Activated B cell treated with CpG ODN at 0.5 μM for 24 hours (primary cell): ENCODE measurements at regions of chr12 and their contacts with region 1.

Region 1: GRCh38 chr12:123580772-123581171 is 3.6 kb upstream of the TMED2 start:
- DNase-seq: no peak
- ATAC-seq: no peak
- H3K4me3 Mint-ChIP-seq: no peak overlapping the region
- H3K27ac Mint-ChIP-seq: no peak overlapping the region
- H3K4me1 Mint-ChIP-seq: peaks cover 26% of the 10 kb centered on the region
- H3K27me3 Mint-ChIP-seq: no peaks in the 10 kb centered on the region
- CTCF ChIP-seq: no peak

Region 2: DNA sequence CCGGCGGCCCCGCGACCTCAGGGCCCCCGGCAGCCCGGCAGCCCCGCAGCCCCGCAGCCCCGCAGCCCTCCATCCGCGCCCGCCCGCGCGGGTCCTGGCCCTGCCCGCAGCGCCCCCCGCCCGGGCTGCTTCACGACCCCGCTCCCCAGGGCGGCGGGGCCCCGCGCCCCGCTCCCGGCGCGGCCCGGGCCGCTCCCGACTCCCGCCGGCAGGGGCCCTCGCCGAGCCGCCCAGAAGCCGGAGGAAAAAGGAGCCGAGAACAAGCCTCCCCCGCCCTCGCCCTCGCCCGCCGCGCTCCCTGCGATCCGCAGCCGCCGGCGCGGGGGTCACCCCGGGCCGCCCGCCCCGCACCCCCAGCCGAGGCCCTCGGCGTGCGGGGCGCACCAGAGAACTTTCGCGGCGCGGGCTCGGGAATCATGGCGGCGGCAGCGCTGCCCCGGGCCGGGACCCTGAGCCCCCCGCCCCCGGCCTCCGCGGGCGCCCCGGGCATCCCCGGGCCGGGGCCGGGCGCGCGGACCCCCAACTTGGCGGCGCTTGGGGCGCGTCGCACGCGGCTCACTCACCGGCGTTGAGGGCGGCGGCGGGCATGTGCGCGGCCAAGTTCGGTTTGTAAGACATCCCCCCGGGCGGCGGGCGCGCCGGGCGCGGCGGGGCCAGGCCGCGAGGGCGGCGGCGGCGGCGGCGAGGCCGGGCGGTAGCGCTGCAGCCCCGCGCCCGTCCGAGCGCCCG is 309.6 kb before region 1 on chr12:
- CTCF ChIA-PET with region 1: interaction called, 4 read pairs
- POLR2A ChIA-PET with region 1: interaction called, 4 read pairs
- intact Hi-C with region 1: loop called (anchors 1 kb)
- DNase-seq: peak; percentile 76
- ATAC-seq: peak; percentile 81
- H3K4me3 Mint-ChIP-seq: no peak overlapping the region
- H3K27ac Mint-ChIP-seq: no peak overlapping the region
- H3K4me1 Mint-ChIP-seq: peaks cover 31% of the 10 kb centered on the region
- H3K27me3 Mint-ChIP-seq: no peaks in the 10 kb centered on the region
- CTCF ChIP-seq: no peak

Region 3: GRCh38 chr12:123388177-123388947 is 192.4 kb before region 1 on chr12:
- CTCF ChIA-PET with region 1: no interaction called
- POLR2A ChIA-PET with region 1: interaction called, 3 read pairs
- intact Hi-C with region 1: loop called (anchors 1 kb)
- DNase-seq: peak; percentile 79
- ATAC-seq: peak; percentile 59
- H3K4me3 Mint-ChIP-seq: peak overlapping the region; percentile 88
- H3K27ac Mint-ChIP-seq: peak overlapping the region; percentile 87
- H3K4me1 Mint-ChIP-seq: peaks cover 36% of the 10 kb centered on the region
- H3K27me3 Mint-ChIP-seq: no peaks in the 10 kb centered on the region
- CTCF ChIP-seq: no peak

Region 4: GRCh38 chr12:123457980-123458783 is 122.6 kb before region 1 on chr12 and contains the start of gene SNRNP35:
- CTCF ChIA-PET with region 1: no interaction called
- POLR2A ChIA-PET with region 1: no interaction called
- intact Hi-C with region 1: loop called (anchors 1 kb)
- DNase-seq: peak; percentile 84
- ATAC-seq: peak; percentile 79
- H3K4me3 Mint-ChIP-seq: peak within 1 kb of the TSS; percentile 100
- H3K27ac Mint-ChIP-seq: peak within 1 kb of the TSS; percentile 100
- H3K4me1 Mint-ChIP-seq: peaks cover 33% of the 10 kb centered on the region
- H3K27me3 Mint-ChIP-seq: no peaks in the 10 kb centered on the region
- CTCF ChIP-seq: no peak
- total RNA-seq, gene SNRNP35: 39.5 and 51.5 TPM in 2 replicates

Region 5: GRCh38 chr12:123633379-123634141 is 52.8 kb after region 1 on chr12 and contains the starts of genes EIF2B1 and GTF2H3:
- CTCF ChIA-PET with region 1: no interaction called
- POLR2A ChIA-PET with region 1: interaction called, 4 read pairs
- intact Hi-C with region 1: loop called (anchors 1 kb)
- DNase-seq: peak; percentile 96
- ATAC-seq: peak; percentile 98
- H3K4me3 Mint-ChIP-seq: peak within 1 kb of the TSS; percentile 96
- H3K27ac Mint-ChIP-seq: peak within 1 kb of the TSS; percentile 93
- H3K4me1 Mint-ChIP-seq: peaks cover 24% of the 10 kb centered on the region
- H3K27me3 Mint-ChIP-seq: no peaks in the 10 kb centered on the region
- CTCF ChIP-seq: no peak
- total RNA-seq, gene EIF2B1: 67.3 and 79.7 TPM in 2 replicates
- total RNA-seq, gene GTF2H3: 33.8 and 36.2 TPM in 2 replicates